ENCODE measurements at regions of chr9 and their contacts with region 1.

Region 1: GRCh38 chr9:136885950-136886578 is at the start of gene TRAF2:
- DNase-seq: peak; percentile 99 to 100 (median 100)
- ATAC-seq: peak; percentile 97
- H3K4me3 ChIP-seq: peak within 1 kb of the TSS; percentile 92
- H3K27ac ChIP-seq: peak within 1 kb of the TSS; percentile 88
- H3K4me1 ChIP-seq: peaks cover 27 to 69% of the 10 kb centered on the region in 2 experiments
- H3K27me3 ChIP-seq: no peaks in the 10 kb centered on the region
- CTCF ChIP-seq: peak in 2 of 3 experiments; percentile 0 to 9; a peak in 1 of 6 replicates
- EP300 ChIP-seq: no peak
- POLR2A ChIP-seq: peak; percentile 89
- RAD21 ChIP-seq: no peak
- polyA plus RNA-seq, gene TRAF2: 0.24 to 0.81 TPM

Region 2: GRCh38 chr9:136527721-136528691 is 358.1 kb before region 1 on chr9:
- CTCF ChIA-PET with region 1: no interaction called
- POLR2A ChIA-PET with region 1: no interaction called
- in situ Hi-C with region 1: no loop called
- intact Hi-C with region 1: no loop called
- DNase-seq: peak; percentile 41 to 91 (median 82)
- ATAC-seq: peak; percentile 52
- H3K4me3 ChIP-seq: no peak overlapping the region
- H3K27ac ChIP-seq: peak overlapping the region; percentile 41; the same call in 1 of the 3 replicates
- H3K4me1 ChIP-seq: peaks cover 0 to 87% of the 10 kb centered on the region in 2 experiments; a peak in 3 of 5 replicates
- H3K27me3 ChIP-seq: no peaks in the 10 kb centered on the region
- CTCF ChIP-seq: 0 out of 6 replicates have a peak, but pooled peaks of 1 of the 3 experiments have one; percentile 5
- EP300 ChIP-seq: no peak
- POLR2A ChIP-seq: no peak
- RAD21 ChIP-seq: no peak

Region 3: DNA sequence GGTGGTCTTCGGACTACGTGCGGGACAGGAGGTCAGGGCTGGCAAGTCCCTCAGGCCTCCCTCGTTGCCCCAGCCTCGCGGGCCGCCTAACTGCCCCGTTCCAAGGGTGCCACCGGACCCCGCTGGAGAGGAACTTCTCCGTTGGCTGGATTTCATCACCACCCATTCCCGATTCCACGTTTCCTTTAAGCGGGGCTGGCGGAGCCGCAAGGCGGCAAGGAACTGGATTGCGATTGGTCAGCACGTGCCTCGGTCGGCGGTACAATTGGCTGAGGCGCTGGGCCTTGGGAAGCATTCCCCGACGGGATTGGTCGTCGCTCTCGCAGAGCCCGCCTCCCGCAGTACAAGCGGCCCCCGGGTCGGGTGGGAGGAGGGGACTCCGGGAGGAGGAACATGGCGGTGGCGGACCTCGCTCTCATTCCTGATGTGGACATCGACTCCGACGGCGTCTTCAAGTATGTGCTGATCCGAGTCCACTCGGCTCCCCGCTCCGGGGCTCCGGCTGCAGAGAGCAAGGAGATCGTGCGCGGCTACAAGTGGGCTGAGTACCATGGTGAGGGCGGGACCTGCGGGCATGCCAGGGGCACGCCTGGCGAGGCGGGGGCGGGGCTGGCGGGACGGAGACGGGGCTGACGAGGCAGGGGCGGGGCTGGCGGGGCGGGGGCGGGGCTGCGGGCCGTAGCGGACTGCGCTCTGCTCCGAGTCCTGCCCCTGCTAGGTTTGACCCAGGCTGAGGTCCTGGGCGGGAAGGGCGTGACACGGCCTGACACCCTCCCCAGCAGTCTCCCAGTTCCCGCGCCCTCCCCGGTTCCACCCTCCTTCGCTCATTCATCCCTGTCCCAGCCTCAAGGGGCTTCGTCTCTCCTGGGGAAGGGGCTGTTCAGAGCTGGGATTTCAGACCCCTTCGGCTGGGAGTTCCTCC is 36.8 kb before region 1 on chr9 and contains the start of gene PHPT1:
- CTCF ChIA-PET with region 1: interaction called, 3 read pairs
- POLR2A ChIA-PET with region 1: interaction called, 4 read pairs
- in situ Hi-C with region 1: no loop called
- intact Hi-C with region 1: loop called (anchors 1 kb)
- DNase-seq: peak; percentile 94 to 99 (median 97)
- ATAC-seq: peak; percentile 84
- H3K4me3 ChIP-seq: peak within 1 kb of the TSS; percentile 95
- H3K27ac ChIP-seq: peak within 1 kb of the TSS; percentile 89
- H3K4me1 ChIP-seq: peaks cover 9 to 84% of the 10 kb centered on the region in 2 experiments; a peak in 4 of 5 replicates
- H3K27me3 ChIP-seq: no peaks in the 10 kb centered on the region
- CTCF ChIP-seq: no peak
- EP300 ChIP-seq: peak; percentile 22; the same call in 1 of the 2 replicates
- POLR2A ChIP-seq: peak; percentile 95
- RAD21 ChIP-seq: no peak
- polyA plus RNA-seq, gene PHPT1: 131 to 166 TPM

Region 4: GRCh38 chr9:136865735-136866103 is 20.3 kb before region 1 on chr9:
- CTCF ChIA-PET with region 1: no interaction called
- POLR2A ChIA-PET with region 1: interaction called, 15 read pairs
- in situ Hi-C with region 1: no loop called
- intact Hi-C with region 1: no loop called
- DNase-seq: peak in 2 of 4 experiments; percentile 87 to 88
- ATAC-seq: peak; percentile 24
- H3K4me3 ChIP-seq: peak overlapping the region; percentile 95
- H3K27ac ChIP-seq: peak overlapping the region; percentile 77
- H3K4me1 ChIP-seq: peaks cover 5 to 32% of the 10 kb centered on the region in 2 experiments; a peak in 3 of 5 replicates
- H3K27me3 ChIP-seq: no peaks in the 10 kb centered on the region
- CTCF ChIP-seq: no peak
- EP300 ChIP-seq: no peak
- POLR2A ChIP-seq: no peak
- RAD21 ChIP-seq: no peak

Region 5: GRCh38 chr9:136875159-136875559 is 10.9 kb before region 1 on chr9:
- CTCF ChIA-PET with region 1: no interaction called
- POLR2A ChIA-PET with region 1: interaction called, 10 read pairs
- in situ Hi-C with region 1: no loop called
- intact Hi-C with region 1: no loop called
- DNase-seq: peak; percentile 40 to 78 (median 60)
- ATAC-seq: peak; percentile 91
- H3K4me3 ChIP-seq: no peak overlapping the region
- H3K27ac ChIP-seq: no peak overlapping the region
- H3K4me1 ChIP-seq: peaks cover 5 to 9% of the 10 kb centered on the region in 2 experiments; a peak in 4 of 5 replicates
- H3K27me3 ChIP-seq: no peaks in the 10 kb centered on the region
- CTCF ChIP-seq: no peak
- EP300 ChIP-seq: peak; percentile 41; the same call in 1 of the 2 replicates
- POLR2A ChIP-seq: no peak
- RAD21 ChIP-seq: no peak

Measured in K562 (cell line).